Activated naive CD4-positive, alpha-beta T cell treated with anti-CD3 and anti-CD28 coated beads for 36 hours (primary cell): ENCODE measurements at regions of chr3 and their contacts with region 1.

Region 1: GRCh38 chr3:12187448-12188327 is 29.0 kb upstream of the TIMP4 start:
- DNase-seq: peak; percentile 80
- H3K4me3 Mint-ChIP-seq: peak overlapping the region; percentile 26
- H3K27ac Mint-ChIP-seq: peak overlapping the region; percentile 84
- H3K4me1 Mint-ChIP-seq: peaks cover 17% of the 10 kb centered on the region
- H3K27me3 Mint-ChIP-seq: no peaks in the 10 kb centered on the region

Region 2: DNA sequence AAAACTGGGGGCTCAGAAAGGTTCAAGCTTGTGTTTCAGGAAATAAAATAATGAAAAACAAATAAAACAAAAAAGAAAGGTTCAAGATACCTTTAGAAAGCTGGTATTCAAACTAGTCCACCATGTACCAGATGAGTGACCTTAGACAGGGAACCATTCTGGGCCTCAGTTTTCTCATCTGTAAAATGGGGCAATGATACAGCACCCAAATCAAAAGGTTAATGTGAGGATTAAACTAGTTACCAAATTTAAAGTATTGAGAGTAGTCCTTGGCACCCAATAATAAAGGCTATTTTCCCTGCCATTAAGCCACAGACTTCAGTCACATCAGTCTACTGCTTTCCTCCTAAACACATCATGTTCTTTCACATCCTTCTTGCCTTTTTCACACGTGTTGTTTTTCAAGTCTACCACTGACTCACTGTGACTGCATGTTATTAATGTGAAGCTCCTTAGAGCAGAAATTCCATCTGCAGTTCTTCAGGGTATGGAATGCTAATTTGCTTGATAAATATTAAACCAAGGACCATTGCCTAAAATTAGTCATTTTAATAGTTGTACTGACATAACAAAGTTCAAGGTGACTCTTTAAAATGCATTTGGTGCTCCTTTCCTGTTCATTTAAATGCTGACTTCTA is 360.9 kb before region 1 on chr3:
- CTCF ChIA-PET with region 1: no interaction called
- intact Hi-C with region 1: no loop called
- DNase-seq: no peak
- H3K4me3 Mint-ChIP-seq: no peak overlapping the region
- H3K27ac Mint-ChIP-seq: no peak overlapping the region
- H3K4me1 Mint-ChIP-seq: peaks cover 1% of the 10 kb centered on the region
- H3K27me3 Mint-ChIP-seq: no peaks in the 10 kb centered on the region

Region 3: DNA sequence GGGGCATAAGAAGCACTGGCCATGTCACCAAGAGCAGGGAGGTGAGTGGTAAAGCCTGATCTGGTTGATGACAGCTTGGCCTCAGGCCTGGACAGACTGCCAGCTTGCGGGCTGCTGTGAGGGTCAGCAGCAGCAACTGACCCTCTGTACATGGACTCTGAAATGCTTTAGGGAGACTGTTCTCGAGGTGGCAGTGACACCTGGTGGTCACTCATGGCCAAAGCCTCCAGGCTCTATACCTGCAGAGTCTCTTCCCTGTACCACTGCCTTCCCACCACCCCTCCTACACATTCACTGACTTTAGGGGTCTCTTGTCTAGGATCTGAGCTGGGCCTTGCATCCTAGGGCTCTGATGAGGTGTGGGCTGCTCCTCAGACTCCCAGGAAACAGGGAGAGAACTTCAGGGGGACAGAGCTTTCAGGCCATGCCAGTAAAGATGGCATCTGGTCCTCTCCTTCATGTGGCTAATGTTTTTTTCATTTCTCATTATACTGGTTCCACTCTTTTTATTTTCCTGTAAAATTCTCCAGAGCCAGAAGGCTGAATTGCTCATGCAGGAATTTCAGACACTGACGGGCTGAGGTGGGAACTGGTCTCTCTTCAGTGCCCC is 11.7 kb before region 1 on chr3:
- CTCF ChIA-PET with region 1: interaction called, 5 read pairs
- intact Hi-C with region 1: loop called (anchors 1 kb)
- DNase-seq: peak; percentile 62
- H3K4me3 Mint-ChIP-seq: no peak overlapping the region
- H3K27ac Mint-ChIP-seq: no peak overlapping the region
- H3K4me1 Mint-ChIP-seq: peaks cover 14% of the 10 kb centered on the region
- H3K27me3 Mint-ChIP-seq: peaks cover 1% of the 10 kb centered on the region